ENCODE measurements at regions of chr11 and their contacts with region 1.

Region 1: DNA sequence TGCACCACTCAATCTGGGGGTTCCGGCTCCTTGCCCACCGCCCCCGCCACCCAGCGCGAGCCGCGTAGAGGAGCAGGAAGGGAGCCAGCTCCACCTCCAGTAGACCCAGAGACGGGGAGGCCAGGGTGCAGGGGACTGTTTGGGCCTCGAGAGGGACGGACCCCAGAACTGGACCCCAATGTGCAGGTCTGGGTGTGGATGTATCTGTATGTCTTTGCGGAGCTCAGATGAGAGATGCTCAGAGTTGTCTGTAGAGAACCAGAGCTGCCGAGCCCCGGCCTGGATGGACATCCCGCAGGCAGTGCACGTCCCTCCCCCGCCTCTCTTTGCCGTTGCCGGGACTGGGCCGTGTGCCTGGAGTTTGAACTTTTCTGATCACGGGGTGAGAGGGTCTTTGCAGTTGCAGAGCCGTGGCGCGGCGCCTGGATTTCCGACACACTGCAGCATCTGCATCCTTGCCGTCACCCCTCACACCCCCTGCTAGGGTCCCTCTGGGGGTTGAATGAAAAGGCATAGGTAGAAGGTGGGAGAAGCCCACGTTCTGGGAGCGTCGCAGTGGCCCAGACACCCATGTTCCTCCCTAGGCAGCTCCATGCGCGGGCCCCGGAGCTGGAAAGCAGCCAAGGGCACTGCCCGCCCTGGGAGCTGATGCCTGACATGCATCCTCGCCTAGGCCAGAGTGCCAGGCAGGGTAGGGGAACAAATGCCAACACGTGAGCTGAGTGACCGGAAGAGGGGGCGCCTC is 105.2 kb downstream of the KCNQ1 start:
- DNase-seq: no peak
- ATAC-seq: no peak
- H3K4me3 ChIP-seq: no peak overlapping the region
- H3K27ac ChIP-seq: no peak overlapping the region
- H3K4me1 ChIP-seq: no peaks in the 10 kb centered on the region
- H3K27me3 ChIP-seq: peaks cover 1% of the 10 kb centered on the region
- CTCF ChIP-seq: no peak

Region 2: DNA sequence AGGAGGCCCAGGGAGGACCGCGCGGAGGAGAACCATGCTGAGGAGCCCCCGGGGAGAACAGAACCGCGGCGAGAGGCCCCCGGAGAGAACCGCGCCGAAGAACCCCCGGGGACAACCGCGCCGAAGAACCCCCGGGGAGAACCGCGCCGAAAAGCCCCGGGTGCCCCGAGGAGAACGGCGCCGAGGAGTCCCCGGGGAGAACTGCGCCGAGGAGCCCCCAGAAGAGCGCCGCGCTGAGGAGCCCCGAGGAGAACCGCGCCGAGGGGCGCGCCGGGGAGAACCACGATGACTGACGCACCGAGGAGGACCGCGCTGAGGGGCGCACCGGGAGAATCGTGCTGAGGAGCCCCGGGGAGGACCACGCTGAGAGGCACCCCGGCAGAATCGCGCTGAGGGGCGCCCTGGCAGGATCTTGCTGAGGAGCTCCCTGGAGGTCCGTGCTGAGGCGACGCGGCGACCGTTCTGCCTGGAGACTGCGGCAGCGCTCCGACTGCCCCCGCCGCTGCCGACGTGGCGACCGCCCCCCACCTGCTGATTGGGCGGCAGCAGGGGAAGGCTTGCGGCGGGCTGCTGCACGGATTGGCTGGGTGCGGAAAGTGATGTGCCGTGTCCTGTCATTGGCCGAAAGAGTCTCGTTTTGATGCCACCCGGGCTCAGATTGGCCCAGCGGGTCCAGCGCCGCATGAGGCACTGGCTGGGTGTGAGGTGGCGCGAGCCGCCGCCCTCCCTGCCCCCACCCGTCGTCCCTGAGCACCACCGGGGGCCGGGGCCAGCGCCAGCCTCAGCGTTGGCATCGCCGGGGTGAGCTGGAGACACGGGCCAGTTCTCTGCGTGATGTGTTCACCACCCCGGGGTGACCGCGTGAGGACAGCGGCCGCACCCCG is 149.7 kb after region 1 on chr11 and contains the start of gene KCNQ1OT1:
- CTCF ChIA-PET with region 1: no interaction called
- POLR2A ChIA-PET with region 1: no interaction called
- in situ Hi-C with region 1: no loop called
- intact Hi-C with region 1: loop called (anchors 10 kb)
- DNase-seq: peak; percentile 91
- ATAC-seq: peak; percentile 96
- H3K4me3 ChIP-seq: peak within 1 kb of the TSS; percentile 62 to 65
- H3K27ac ChIP-seq: peak within 1 kb of the TSS; percentile 75
- H3K4me1 ChIP-seq: peaks cover 10% of the 10 kb centered on the region
- H3K27me3 ChIP-seq: no peaks in the 10 kb centered on the region
- CTCF ChIP-seq: no peak
- total RNA-seq, gene KCNQ1OT1: 1.3 TPM